Upper lobe of right lung (tissue), 1 donor: ENCODE measurements at regions of chr2 and their contacts with region 1.

Region 1: DNA sequence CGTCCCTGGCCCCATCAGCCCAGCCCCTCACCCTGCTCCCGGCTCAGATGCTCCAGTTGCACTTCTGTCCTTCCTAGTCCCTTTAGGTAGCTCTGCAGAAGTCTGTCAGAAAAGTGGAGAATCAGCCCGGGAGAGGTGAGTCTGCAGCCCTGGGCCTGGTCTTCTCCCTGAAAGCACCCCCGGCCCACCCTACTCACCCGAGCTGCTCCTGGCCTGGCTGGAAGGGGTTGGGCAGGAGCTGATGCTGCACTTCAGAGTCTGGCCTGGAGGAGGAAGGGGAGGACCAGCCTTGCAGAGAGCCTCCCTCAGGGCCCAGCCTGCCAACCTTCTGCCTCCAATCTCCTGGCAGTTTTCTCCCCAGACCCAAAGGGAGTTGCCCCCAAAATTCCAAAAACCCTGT is 15.8 kb downstream of the KHK start:
- DNase-seq: no peak
- ATAC-seq: no peak
- H3K4me3 ChIP-seq: no peak overlapping the region
- H3K27ac ChIP-seq: no peak overlapping the region
- H3K4me1 ChIP-seq: no peaks in the 10 kb centered on the region
- H3K27me3 ChIP-seq: peaks cover 12% of the 10 kb centered on the region
- CTCF ChIP-seq: no peak

Region 2: DNA sequence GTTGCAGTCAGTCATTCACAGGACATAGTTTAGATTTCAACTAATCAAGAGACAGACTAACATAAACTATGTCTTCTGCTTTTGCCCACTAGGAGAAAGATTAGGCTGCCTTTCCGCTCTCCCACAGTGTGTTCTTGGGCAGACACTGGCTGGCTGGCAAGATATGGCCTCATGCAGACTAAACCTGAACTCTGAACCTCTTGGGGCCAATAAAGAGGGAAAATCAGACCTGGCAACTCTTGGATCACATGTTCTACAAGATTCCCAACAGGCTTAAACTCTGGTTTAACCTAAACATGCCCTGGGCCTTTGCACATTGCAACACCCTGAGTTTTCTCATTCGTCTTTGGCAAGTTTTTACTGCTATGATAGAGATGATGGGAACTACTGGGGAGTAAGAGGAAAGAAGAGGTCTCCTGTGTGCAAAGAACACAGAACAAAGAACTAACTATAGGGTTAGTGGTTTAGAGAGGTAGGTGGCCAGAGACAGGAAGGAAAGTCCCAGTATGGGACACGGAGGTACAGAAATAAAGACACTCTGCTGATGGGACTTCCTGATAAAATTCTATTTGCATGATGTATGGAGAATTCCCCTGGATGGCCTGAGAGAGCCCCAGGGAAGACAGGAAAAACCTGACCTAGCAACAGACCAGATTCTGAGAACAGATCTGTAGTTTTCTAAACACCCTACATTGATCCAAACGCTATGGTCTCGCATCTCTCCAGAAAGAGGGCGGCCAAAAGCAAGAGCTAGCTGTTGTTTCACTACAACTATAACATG is 107.5 kb after region 1 on chr2:
- intact Hi-C with region 1: loop called (anchors 10 kb)
- DNase-seq: no peak
- ATAC-seq: no peak
- H3K4me3 ChIP-seq: no peak overlapping the region
- H3K27ac ChIP-seq: no peak overlapping the region
- H3K4me1 ChIP-seq: peaks cover 6% of the 10 kb centered on the region
- H3K27me3 ChIP-seq: no peaks in the 10 kb centered on the region
- CTCF ChIP-seq: no peak